ENCODE measurements at regions of chr1 and their contacts with region 1.

Region 1: DNA sequence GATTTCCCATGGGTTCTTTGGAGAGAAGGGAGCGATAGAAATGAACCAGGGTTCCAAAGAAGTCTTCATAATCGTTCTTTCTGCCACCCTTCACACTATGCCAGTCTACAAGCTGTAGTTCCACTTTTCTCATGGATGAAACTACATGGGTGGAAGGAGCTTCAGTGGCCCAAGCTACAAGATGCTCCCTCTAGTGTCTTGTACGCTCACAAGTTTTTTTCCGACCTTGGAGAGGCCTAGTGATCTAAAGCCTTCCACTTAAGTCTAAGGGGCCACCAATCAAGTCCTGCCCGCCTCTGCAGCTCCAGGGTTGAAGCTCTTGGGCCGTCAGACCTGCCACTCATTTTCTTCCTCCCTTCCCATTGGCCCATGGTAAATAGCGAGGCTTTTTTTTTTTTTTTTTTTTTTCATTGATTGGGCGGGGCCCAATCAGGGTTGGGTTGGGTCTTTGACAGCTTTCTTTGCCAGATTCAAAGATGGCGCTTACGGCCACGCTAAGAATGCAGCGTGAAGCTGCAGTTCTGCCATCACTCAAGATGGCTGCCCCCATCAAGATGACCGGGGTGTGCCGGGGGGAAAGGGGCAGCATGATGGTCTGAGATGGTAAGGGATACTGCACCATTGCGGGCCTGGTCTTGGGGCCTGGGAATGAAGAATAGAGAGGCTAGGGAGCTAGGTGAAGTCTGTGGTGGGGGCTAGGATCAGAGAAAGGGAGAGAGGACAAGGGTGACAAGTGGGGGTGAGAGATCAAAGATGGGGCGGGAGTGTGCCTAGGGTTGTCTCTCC is at the start of gene TOMM40L:
- DNase-seq: peak; percentile 98 to 99 (median 99)
- H3K4me3 ChIP-seq: peak within 1 kb of the TSS; percentile 50 to 79 (median 63)
- H3K4me3 Mint-ChIP-seq: peak within 1 kb of the TSS; percentile 95 to 98
- H3K27ac ChIP-seq: peak within 1 kb of the TSS; percentile 57 to 77
- H3K27ac Mint-ChIP-seq: peak within 1 kb of the TSS; percentile 88 to 99 (median 97)
- H3K4me1 ChIP-seq: peaks cover 32 to 45% of the 10 kb centered on the region in 2 donors
- H3K4me1 Mint-ChIP-seq: peaks cover 62% of the 10 kb centered on the region
- H3K27me3 ChIP-seq: no peaks in the 10 kb centered on the region
- H3K27me3 Mint-ChIP-seq: peaks cover 0 to 5% (median 1%) of the 10 kb centered on the region in 3 donors
- CTCF ChIP-seq: peak; percentile 59
- polyA plus RNA-seq, gene TOMM40L: 3.8 to 31.5 (median 5.2) TPM

Region 2: GRCh38 chr1:161021165-161021960 is 204.4 kb before region 1 on chr1:
- intact Hi-C with region 1: no loop called
- DNase-seq: peak; percentile 49 to 75 (median 68)
- H3K4me3 ChIP-seq: peak overlapping the region; percentile 59 to 87 (median 60)
- H3K4me3 Mint-ChIP-seq: peak overlapping the region; percentile 93 to 95
- H3K27ac ChIP-seq: peak overlapping the region; percentile 38 to 73
- H3K27ac Mint-ChIP-seq: peak overlapping the region; percentile 73 to 96 (median 92)
- H3K4me1 ChIP-seq: peaks cover 44 to 50% of the 10 kb centered on the region in 2 donors
- H3K4me1 Mint-ChIP-seq: peaks cover 54% of the 10 kb centered on the region
- H3K27me3 ChIP-seq: no peaks in the 10 kb centered on the region
- H3K27me3 Mint-ChIP-seq: peaks cover 1 to 12% (median 2%) of the 10 kb centered on the region in 3 donors
- CTCF ChIP-seq: no peak

Region 3: GRCh38 chr1:161209790-161210409 is 15.8 kb before region 1 on chr1:
- intact Hi-C with region 1: loop called in 1 of 2 experiments (anchors 1 kb)
- DNase-seq: peak; percentile 76 to 87 (median 87)
- H3K4me3 ChIP-seq: no peak overlapping the region
- H3K4me3 Mint-ChIP-seq: no peak overlapping the region
- H3K27ac ChIP-seq: peak overlapping the region in 1 of 2 donors; percentile 6
- H3K27ac Mint-ChIP-seq: peak overlapping the region; percentile 47 to 94 (median 85)
- H3K4me1 ChIP-seq: peaks cover 29 to 39% of the 10 kb centered on the region in 2 donors
- H3K4me1 Mint-ChIP-seq: peaks cover 39% of the 10 kb centered on the region
- H3K27me3 ChIP-seq: no peaks in the 10 kb centered on the region
- H3K27me3 Mint-ChIP-seq: no peaks in the 10 kb centered on the region
- CTCF ChIP-seq: peak; percentile 96

Region 4: GRCh38 chr1:161292631-161293030 is 66.9 kb after region 1 on chr1:
- intact Hi-C with region 1: loop called in 1 of 2 experiments (anchors 5 kb)
- DNase-seq: no peak
- H3K4me3 ChIP-seq: no peak overlapping the region
- H3K4me3 Mint-ChIP-seq: no peak overlapping the region
- H3K27ac ChIP-seq: no peak overlapping the region
- H3K27ac Mint-ChIP-seq: no peak overlapping the region
- H3K4me1 ChIP-seq: peaks cover 8 to 10% of the 10 kb centered on the region in 2 donors
- H3K4me1 Mint-ChIP-seq: peaks cover 8% of the 10 kb centered on the region
- H3K27me3 ChIP-seq: no peaks in the 10 kb centered on the region
- H3K27me3 Mint-ChIP-seq: peaks cover 0 to 4% (median 2%) of the 10 kb centered on the region in 3 donors
- CTCF ChIP-seq: no peak

Region 5: DNA sequence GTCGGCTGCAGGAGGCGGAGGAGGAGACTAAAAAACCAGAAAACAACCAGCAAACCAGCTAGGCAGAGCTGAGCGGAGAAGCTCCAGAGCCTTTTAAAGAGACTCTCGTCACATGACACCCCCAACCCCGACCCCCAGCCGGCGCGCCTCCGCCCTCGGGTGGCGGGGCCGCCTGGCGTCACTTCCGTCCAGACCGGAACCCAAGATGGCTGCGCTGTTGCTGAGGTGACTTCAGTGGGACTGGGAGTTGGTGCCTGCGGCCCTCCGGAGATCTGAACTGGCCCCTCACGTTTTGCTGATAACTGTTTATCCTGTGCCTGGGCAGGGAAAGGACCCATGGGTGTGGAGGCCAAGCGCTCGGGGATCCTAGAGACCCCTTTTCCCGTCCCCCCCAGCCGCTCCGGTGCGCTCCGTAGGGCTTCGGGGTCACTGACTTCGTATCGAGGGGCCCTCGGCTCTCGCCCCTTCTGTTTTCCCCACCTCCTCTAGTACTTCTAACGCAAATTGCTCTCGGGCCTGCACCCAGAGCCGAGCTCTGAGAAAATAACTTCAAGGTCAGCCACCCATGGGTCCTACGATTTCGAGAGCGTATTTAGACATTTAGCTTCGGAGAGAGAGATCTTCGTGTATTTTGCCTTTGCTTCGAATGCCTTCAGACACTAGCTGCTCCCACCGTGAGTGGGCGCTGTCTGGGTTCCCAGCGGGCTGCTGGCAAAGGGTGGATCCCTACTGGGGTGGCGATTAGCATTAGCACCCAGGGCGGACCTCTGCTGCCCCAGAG is 88.7 kb after region 1 on chr1 and contains the start of gene SDHC:
- intact Hi-C with region 1: loop called in 1 of 2 experiments (anchors 5 kb)
- DNase-seq: peak; percentile 87 to 88 (median 87)
- H3K4me3 ChIP-seq: peak within 1 kb of the TSS; percentile 70 to 97 (median 91)
- H3K4me3 Mint-ChIP-seq: peak within 1 kb of the TSS; percentile 97 to 98
- H3K27ac ChIP-seq: peak within 1 kb of the TSS; percentile 86 to 99
- H3K27ac Mint-ChIP-seq: peak within 1 kb of the TSS; percentile 98 to 100 (median 99)
- H3K4me1 ChIP-seq: peaks cover 11 to 17% of the 10 kb centered on the region in 2 donors
- H3K4me1 Mint-ChIP-seq: peaks cover 20% of the 10 kb centered on the region
- H3K27me3 ChIP-seq: no peaks in the 10 kb centered on the region
- H3K27me3 Mint-ChIP-seq: peaks cover 1 to 5% (median 2%) of the 10 kb centered on the region in 3 donors
- CTCF ChIP-seq: peak; percentile 46
- polyA plus RNA-seq, gene SDHC: 208 to 350 (median 323) TPM

Region 6: GRCh38 chr1:161382214-161383019 is 156.7 kb after region 1 on chr1:
- intact Hi-C with region 1: loop called in 1 of 2 experiments (anchors 5 kb)
- DNase-seq: peak; percentile 34 to 70 (median 58)
- H3K4me3 ChIP-seq: no peak overlapping the region
- H3K4me3 Mint-ChIP-seq: no peak overlapping the region
- H3K27ac ChIP-seq: no peak overlapping the region
- H3K27ac Mint-ChIP-seq: peak overlapping the region in 3 of 7 donors; percentile 11 to 79 (median 25)
- H3K4me1 ChIP-seq: peaks cover 5 to 6% of the 10 kb centered on the region in 2 donors
- H3K4me1 Mint-ChIP-seq: peaks cover 12% of the 10 kb centered on the region
- H3K27me3 ChIP-seq: no peaks in the 10 kb centered on the region
- H3K27me3 Mint-ChIP-seq: peaks cover 1 to 7% (median 2%) of the 10 kb centered on the region in 3 donors
- CTCF ChIP-seq: peak; percentile 82

Region 7: DNA sequence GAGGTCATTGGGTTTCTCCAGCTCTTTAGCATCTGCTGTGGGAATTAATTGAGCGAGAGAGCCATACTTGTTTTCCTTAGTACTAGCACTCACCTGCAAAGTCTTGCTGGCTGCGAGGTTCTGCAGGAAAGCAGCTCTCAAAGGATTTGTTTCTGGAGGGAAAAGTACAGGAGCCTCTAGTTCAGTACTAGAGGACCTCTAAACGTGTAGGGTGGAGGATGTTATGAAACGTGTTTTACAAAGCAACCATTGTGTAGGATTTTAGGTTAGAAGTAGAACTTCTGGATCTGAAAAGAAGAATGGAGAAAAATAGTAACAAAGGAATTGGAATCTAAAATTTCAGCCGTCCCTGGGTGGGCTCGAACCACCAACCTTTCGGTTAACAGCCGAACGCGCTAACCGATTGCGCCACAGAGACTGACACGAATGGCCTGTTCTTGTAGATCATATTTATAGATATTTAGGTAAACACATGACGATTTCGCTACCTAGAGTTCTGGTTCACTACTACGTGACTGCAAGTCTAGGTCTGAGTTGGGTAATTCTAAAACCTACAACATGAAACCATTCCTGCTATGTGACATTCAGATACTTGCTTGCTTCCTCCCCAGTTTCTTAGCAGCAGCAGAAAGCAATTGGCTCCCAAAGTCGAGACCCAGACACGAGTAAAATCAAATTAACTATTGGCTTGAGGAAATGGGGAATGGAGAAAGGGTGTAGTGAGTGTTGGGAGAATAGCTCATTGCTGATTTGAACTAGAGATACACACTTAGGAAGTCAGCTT is 202.2 kb after region 1 on chr1:
- intact Hi-C with region 1: no loop called
- DNase-seq: no peak
- H3K4me3 ChIP-seq: no peak overlapping the region
- H3K4me3 Mint-ChIP-seq: peak overlapping the region in 1 of 2 donors; percentile 73
- H3K27ac ChIP-seq: no peak overlapping the region
- H3K27ac Mint-ChIP-seq: no peak overlapping the region
- H3K4me1 ChIP-seq: no peaks in the 10 kb centered on the region
- H3K4me1 Mint-ChIP-seq: peaks cover 6% of the 10 kb centered on the region
- H3K27me3 ChIP-seq: peaks cover 51 to 54% of the 10 kb centered on the region in 2 donors
- H3K27me3 Mint-ChIP-seq: peaks cover 55 to 67% (median 57%) of the 10 kb centered on the region in 3 donors
- CTCF ChIP-seq: no peak

Region 8: DNA sequence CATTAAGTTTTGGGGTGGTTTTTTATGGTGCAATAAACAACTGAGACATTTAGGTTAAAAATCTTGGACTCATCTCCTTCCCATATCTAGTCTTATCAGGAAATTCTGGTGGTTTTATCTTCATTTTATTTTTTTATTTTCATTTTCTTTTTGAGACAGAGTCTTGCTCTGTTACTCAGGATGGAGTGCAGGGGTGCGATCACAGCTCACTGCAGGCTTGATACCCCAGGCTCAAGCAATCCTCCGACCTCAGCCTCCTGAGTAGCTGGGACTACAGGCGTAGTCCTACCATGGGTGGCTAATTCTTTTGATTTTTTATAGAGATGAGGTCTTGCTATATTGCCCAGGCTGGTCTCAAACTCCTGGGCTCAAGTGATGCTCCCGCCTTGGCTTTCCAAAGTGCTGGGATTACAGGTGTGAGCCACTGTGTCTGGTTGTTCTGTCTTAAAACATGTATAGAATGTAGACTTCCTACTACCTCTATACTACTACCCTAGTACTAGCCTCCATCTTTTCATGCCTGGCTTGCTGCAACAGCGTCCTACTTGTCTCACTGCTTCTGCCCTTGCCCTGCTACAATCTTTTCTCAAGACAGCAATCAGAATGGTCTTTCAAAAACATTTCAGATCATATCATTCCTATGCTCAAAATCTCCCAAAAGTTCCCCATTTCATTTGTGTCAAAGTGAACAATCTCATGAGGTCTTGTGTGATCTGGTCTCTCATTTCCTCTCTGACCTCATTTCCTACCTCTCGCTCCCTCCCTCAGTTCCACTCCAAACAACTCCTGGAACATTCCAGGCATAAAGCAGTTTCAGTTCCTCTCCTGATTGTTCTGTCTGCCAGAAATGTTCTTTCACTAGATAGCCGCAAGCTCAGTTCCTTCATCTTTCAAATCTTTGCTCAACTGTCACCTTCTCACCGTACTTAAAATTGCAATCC is 273.6 kb after region 1 on chr1:
- intact Hi-C with region 1: no loop called
- DNase-seq: peak; percentile 28 to 87 (median 81)
- H3K4me3 ChIP-seq: peak overlapping the region in 1 of 3 experiments; percentile 17
- H3K4me3 Mint-ChIP-seq: peak overlapping the region; percentile 34 to 77
- H3K27ac ChIP-seq: peak overlapping the region; percentile 47 to 61
- H3K27ac Mint-ChIP-seq: peak overlapping the region; percentile 74 to 89 (median 83)
- H3K4me1 ChIP-seq: peaks cover 35 to 40% of the 10 kb centered on the region in 2 donors
- H3K4me1 Mint-ChIP-seq: peaks cover 37% of the 10 kb centered on the region
- H3K27me3 ChIP-seq: no peaks in the 10 kb centered on the region
- H3K27me3 Mint-ChIP-seq: peaks cover 0 to 1% (median 0%) of the 10 kb centered on the region in 3 donors
- CTCF ChIP-seq: no peak